Activated CD4-positive, alpha-beta memory T cell treated with anti-CD3 and anti-CD28 coated beads, Interleukin-2, amount 10 ng/mL, durations not matched to agents 7 days and 5 days (primary cell): ENCODE measurements at regions of chr2 and their contacts with region 1.

Region 1: GRCh38 chr2:100262555-100263320 is 59.6 kb downstream of the LONRF2 start:
- DNase-seq: peak; percentile 60
- H3K4me3 Mint-ChIP-seq: no peak overlapping the region
- H3K27ac Mint-ChIP-seq: no peak overlapping the region
- H3K4me1 Mint-ChIP-seq: no peaks in the 10 kb centered on the region
- H3K27me3 Mint-ChIP-seq: no peaks in the 10 kb centered on the region

Region 2: GRCh38 chr2:99085421-99085820 is 1177.3 kb before region 1 on chr2:
- CTCF ChIA-PET with region 1: no interaction called
- POLR2A ChIA-PET with region 1: no interaction called
- DNase-seq: no peak
- H3K4me3 Mint-ChIP-seq: no peak overlapping the region
- H3K27ac Mint-ChIP-seq: no peak overlapping the region
- H3K4me1 Mint-ChIP-seq: peaks cover 3% of the 10 kb centered on the region
- H3K27me3 Mint-ChIP-seq: peaks cover 22% of the 10 kb centered on the region

Region 3: DNA sequence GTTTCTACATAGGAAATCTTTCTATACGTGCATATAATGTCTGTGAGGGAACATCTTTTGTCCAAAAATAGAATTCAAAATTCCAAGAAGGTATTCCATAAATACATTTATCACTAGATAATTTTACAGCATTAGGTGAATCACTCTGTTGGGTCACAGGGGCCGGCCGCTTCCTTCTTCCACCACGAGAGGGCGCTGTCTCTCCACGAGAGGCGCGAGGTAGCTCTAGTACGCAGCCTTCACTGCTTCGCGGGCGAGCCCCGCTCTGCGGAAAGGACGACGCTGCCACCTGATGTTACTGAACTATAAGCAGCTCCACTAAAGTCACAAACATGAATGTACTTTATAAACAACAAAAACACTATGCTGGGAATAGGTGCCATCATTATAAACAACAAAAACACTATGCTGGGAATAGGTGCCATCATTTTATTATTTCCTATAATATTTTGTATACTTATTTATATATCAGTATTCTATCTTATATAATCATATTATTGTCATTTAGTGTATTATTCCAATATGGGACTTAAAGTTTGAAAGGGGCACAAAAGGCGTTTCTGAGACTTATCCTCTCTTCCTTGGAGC is 703.6 kb before region 1 on chr2:
- CTCF ChIA-PET with region 1: interaction called, 12 read pairs
- POLR2A ChIA-PET with region 1: no interaction called
- DNase-seq: peak; percentile 80
- H3K4me3 Mint-ChIP-seq: no peak overlapping the region
- H3K27ac Mint-ChIP-seq: no peak overlapping the region
- H3K4me1 Mint-ChIP-seq: peaks cover 2% of the 10 kb centered on the region
- H3K27me3 Mint-ChIP-seq: no peaks in the 10 kb centered on the region

Region 4: DNA sequence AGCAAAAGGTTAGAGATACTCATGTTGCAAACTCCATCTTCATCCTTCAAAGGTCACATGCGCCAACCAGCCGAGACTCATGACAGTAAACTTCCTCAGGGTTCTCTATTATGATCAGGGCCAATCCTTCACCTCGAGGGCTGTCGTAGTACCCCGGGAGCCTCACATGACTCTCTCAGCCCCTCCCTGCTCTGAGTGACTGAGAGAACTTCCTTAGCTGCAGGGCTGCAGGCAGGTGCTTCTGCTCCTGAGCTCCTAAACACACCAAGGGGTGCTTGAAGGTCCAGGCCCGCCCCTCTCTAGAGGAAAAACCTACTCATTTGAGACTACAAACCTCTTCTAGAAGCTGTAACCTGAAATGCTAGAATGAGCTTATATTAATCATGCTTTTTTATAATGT is 11.3 kb after region 1 on chr2:
- CTCF ChIA-PET with region 1: interaction called, 12 read pairs
- POLR2A ChIA-PET with region 1: no interaction called
- DNase-seq: no peak
- H3K4me3 Mint-ChIP-seq: no peak overlapping the region
- H3K27ac Mint-ChIP-seq: no peak overlapping the region
- H3K4me1 Mint-ChIP-seq: peaks cover 6% of the 10 kb centered on the region
- H3K27me3 Mint-ChIP-seq: peaks cover 6% of the 10 kb centered on the region

Region 5: DNA sequence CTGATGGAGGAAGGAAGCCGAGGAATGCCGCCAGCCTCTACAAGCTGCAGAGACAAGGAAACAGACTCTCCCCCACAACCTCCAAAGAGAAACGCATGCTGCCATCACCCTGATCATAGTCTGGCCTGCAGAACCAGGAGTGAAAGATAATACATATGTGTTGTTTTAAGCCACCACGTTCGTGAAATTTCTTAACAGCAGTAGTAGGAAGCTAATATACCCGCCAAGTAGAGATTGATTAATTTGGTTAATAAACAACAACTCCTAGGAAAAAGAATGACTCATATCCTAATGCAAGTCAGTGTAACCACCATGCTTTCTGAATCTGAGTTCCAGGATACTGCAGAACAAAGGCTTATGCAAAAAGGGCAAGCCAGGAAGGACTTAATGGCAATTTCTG is 23.0 kb after region 1 on chr2:
- CTCF ChIA-PET with region 1: interaction called, 13 read pairs
- POLR2A ChIA-PET with region 1: no interaction called
- DNase-seq: no peak
- H3K4me3 Mint-ChIP-seq: no peak overlapping the region
- H3K27ac Mint-ChIP-seq: no peak overlapping the region
- H3K4me1 Mint-ChIP-seq: peaks cover 32% of the 10 kb centered on the region
- H3K27me3 Mint-ChIP-seq: peaks cover 17% of the 10 kb centered on the region

Region 6: GRCh38 chr2:100291120-100291970 is 28.6 kb after region 1 on chr2:
- CTCF ChIA-PET with region 1: interaction called, 13 read pairs
- POLR2A ChIA-PET with region 1: no interaction called
- DNase-seq: peak; percentile 78
- H3K4me3 Mint-ChIP-seq: no peak overlapping the region
- H3K27ac Mint-ChIP-seq: no peak overlapping the region
- H3K4me1 Mint-ChIP-seq: peaks cover 8% of the 10 kb centered on the region
- H3K27me3 Mint-ChIP-seq: peaks cover 22% of the 10 kb centered on the region

Region 7: DNA sequence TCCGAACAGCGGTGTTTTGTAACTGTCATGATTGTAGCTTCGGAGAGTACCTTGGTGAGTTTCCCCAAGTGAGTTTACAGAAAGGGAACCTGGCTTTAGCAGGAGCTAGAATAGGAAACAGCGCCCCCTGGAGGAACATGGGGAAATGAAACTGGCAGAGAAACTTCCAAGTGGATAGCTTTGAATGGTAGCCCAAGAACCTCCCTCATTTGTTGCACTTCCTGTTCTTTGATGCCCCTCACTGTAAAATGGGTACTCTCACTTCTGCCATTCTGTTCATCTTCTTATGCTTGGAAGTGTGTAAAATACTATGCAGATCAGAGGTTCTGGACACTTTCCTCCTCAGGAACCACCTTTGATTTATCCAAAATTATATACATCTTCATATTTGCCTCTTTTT is 118.5 kb after region 1 on chr2:
- CTCF ChIA-PET with region 1: interaction called, 135 read pairs
- POLR2A ChIA-PET with region 1: interaction called, 17 read pairs
- DNase-seq: peak; percentile 71
- H3K4me3 Mint-ChIP-seq: no peak overlapping the region
- H3K27ac Mint-ChIP-seq: no peak overlapping the region
- H3K4me1 Mint-ChIP-seq: no peaks in the 10 kb centered on the region
- H3K27me3 Mint-ChIP-seq: peaks cover 6% of the 10 kb centered on the region